ENCODE measurements at regions of chrX and their contacts with region 1.

Region 1: DNA sequence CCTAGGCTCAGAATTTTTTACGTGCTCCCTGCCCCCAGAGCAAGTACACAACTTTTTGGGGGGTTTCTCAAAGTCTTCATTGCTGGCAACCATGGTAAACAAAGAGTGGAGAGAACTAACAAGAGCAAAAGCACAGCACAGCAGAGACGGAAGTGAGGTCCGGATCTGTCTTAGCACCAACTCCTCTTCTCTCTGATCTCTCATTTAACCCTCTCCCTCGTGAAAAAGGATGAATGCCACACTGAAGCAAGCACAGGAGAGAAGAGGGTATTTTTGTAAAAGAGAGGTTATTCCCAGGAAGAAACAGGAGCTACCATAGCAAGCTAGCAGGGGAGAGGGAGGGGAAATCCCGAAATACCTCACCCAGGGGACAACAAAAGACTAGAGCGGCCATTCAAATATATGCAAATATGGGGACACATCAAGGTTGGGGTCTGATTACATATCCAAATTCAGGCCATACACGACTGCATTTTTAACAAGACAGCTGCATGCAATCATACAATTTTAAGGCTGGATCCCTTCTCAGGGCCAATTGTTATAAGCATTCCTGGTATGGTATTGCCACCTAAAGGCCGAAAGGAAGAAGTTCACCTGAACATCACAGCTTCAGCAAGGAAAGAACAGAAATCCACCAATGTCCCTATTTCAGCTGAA is 46.6 kb downstream of the CD40LG start:
- DNase-seq: no peak
- ATAC-seq: peak; percentile 89
- H3K4me3 ChIP-seq: no peak overlapping the region
- H3K27ac ChIP-seq: peak overlapping the region; percentile 35
- H3K4me1 ChIP-seq: peaks cover 20% of the 10 kb centered on the region
- H3K27me3 ChIP-seq: no peaks in the 10 kb centered on the region; a peak in 1 of 4 replicates
- CTCF ChIP-seq: peak; percentile 72 to 85 (median 72)
- EP300 ChIP-seq: no peak
- POLR2A ChIP-seq: no peak
- RAD21 ChIP-seq: peak; percentile 96

Region 2: GRCh38 chrX:135632353-135632752 is 1062.2 kb before region 1 on chrX:
- CTCF ChIA-PET with region 1: no interaction called
- POLR2A ChIA-PET with region 1: no interaction called
- RAD21 ChIA-PET with region 1: no interaction called
- SMC1A ChIA-PET with region 1: no interaction called
- in situ Hi-C with region 1: no loop called
- intact Hi-C with region 1: loop called (anchors 5 kb)
- DNase-seq: peak; percentile 21
- ATAC-seq: peak; percentile 91
- H3K4me3 ChIP-seq: no peak overlapping the region
- H3K27ac ChIP-seq: no peak overlapping the region
- H3K4me1 ChIP-seq: no peaks in the 10 kb centered on the region; the same call in 1 of the 2 replicates
- H3K27me3 ChIP-seq: no peaks in the 10 kb centered on the region
- CTCF ChIP-seq: peak; percentile 22 to 67 (median 25); a peak in 4 of 6 replicates
- EP300 ChIP-seq: no peak
- POLR2A ChIP-seq: no peak
- RAD21 ChIP-seq: peak; percentile 79

Region 3: GRCh38 chrX:136268051-136269048 is 426.2 kb before region 1 on chrX:
- CTCF ChIA-PET with region 1: interaction called, 6 read pairs
- POLR2A ChIA-PET with region 1: no interaction called
- RAD21 ChIA-PET with region 1: interaction called, 6 read pairs
- SMC1A ChIA-PET with region 1: interaction called, 7 read pairs
- in situ Hi-C with region 1: loop called (anchors 10 kb)
- intact Hi-C with region 1: no loop called
- DNase-seq: no peak
- ATAC-seq: peak; percentile 91
- H3K4me3 ChIP-seq: no peak overlapping the region
- H3K27ac ChIP-seq: no peak overlapping the region
- H3K4me1 ChIP-seq: no peaks in the 10 kb centered on the region; the same call in 1 of the 2 replicates
- H3K27me3 ChIP-seq: no peaks in the 10 kb centered on the region
- CTCF ChIP-seq: peak; percentile 74 to 78 (median 76); a peak in 5 of 6 replicates
- EP300 ChIP-seq: no peak
- POLR2A ChIP-seq: no peak
- RAD21 ChIP-seq: peak; percentile 87

Region 4: GRCh38 chrX:136496770-136497598 is 197.6 kb before region 1 on chrX and contains the start of gene HTATSF1:
- CTCF ChIA-PET with region 1: interaction called, 3 read pairs
- POLR2A ChIA-PET with region 1: no interaction called
- RAD21 ChIA-PET with region 1: interaction called, 6 read pairs
- SMC1A ChIA-PET with region 1: no interaction called
- in situ Hi-C with region 1: loop called (anchors 10 kb)
- intact Hi-C with region 1: loop called (anchors 2 kb)
- DNase-seq: peak; percentile 48
- ATAC-seq: peak; percentile 82
- H3K4me3 ChIP-seq: peak within 1 kb of the TSS; percentile 72
- H3K27ac ChIP-seq: peak within 1 kb of the TSS; percentile 90
- H3K4me1 ChIP-seq: no peaks in the 10 kb centered on the region
- H3K27me3 ChIP-seq: no peaks in the 10 kb centered on the region; a peak in 1 of 4 replicates
- CTCF ChIP-seq: no peak
- EP300 ChIP-seq: no peak
- POLR2A ChIP-seq: peak; percentile 57
- RAD21 ChIP-seq: no peak
- polyA plus RNA-seq, gene HTATSF1: 13.2 to 26.9 TPM

Region 5: GRCh38 chrX:136577552-136577951 is 117.0 kb before region 1 on chrX:
- CTCF ChIA-PET with region 1: interaction called, 48 read pairs
- POLR2A ChIA-PET with region 1: interaction called, 3 read pairs
- RAD21 ChIA-PET with region 1: interaction called, 20 read pairs
- SMC1A ChIA-PET with region 1: interaction called, 49 read pairs
- in situ Hi-C with region 1: no loop called
- intact Hi-C with region 1: loop called (anchors 1 kb)
- DNase-seq: no peak
- ATAC-seq: peak; percentile 100
- H3K4me3 ChIP-seq: no peak overlapping the region
- H3K27ac ChIP-seq: no peak overlapping the region
- H3K4me1 ChIP-seq: no peaks in the 10 kb centered on the region
- H3K27me3 ChIP-seq: no peaks in the 10 kb centered on the region
- CTCF ChIP-seq: peak; percentile 71 to 82 (median 82)
- EP300 ChIP-seq: no peak
- POLR2A ChIP-seq: no peak
- RAD21 ChIP-seq: peak; percentile 67

Region 6: GRCh38 chrX:136608295-136609171 is 86.0 kb before region 1 on chrX:
- CTCF ChIA-PET with region 1: interaction called, 104 read pairs
- POLR2A ChIA-PET with region 1: interaction called, 4 read pairs
- RAD21 ChIA-PET with region 1: interaction called, 73 read pairs
- SMC1A ChIA-PET with region 1: interaction called, 100 read pairs
- in situ Hi-C with region 1: no loop called
- intact Hi-C with region 1: loop called (anchors 1 kb)
- DNase-seq: no peak
- ATAC-seq: peak; percentile 80
- H3K4me3 ChIP-seq: no peak overlapping the region
- H3K27ac ChIP-seq: no peak overlapping the region
- H3K4me1 ChIP-seq: no peaks in the 10 kb centered on the region
- H3K27me3 ChIP-seq: no peaks in the 10 kb centered on the region
- CTCF ChIP-seq: peak; percentile 14 to 37 (median 29); a peak in 4 of 6 replicates
- EP300 ChIP-seq: no peak
- POLR2A ChIP-seq: no peak
- RAD21 ChIP-seq: peak; percentile 64

Region 7: DNA sequence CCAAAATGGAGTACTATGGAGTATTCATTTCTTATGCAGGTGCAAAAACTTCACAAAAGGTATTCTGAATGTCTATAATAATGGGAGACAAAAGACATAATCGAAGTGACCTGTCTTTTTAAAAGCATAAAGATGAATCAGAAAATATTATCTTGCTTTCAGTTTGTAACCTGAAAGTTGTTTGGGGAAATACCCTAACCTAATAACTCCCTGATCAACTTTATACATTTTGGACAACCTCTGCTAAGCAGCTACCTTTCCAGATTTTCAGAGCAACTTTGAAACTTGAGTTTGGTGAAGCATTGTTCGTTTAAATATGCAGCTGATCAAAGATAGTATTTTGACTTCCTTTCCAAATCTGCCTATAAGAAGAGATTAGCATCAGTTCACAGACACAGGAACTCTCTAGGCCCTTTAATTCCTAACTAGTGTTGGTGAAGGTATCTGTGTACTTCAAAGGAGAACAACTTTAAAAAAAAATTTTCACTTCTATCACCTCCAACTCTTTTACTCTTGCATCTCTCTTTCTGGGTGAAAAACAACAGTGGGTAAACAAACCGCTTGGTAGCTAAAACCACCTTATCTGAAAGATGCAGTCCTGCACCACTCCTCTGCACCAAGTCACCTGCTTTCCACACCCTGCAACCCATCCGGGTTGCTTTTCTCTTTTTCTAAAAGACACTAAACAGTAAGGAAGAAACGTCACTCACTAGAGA is 20.1 kb before region 1 on chrX:
- CTCF ChIA-PET with region 1: interaction called, 4 read pairs
- POLR2A ChIA-PET with region 1: interaction called, 4 read pairs
- RAD21 ChIA-PET with region 1: interaction called, 7 read pairs
- SMC1A ChIA-PET with region 1: interaction called, 11 read pairs
- in situ Hi-C with region 1: no loop called
- intact Hi-C with region 1: no loop called
- DNase-seq: no peak
- ATAC-seq: peak; percentile 56
- H3K4me3 ChIP-seq: peak overlapping the region; percentile 14; the same call in 1 of the 2 replicates
- H3K27ac ChIP-seq: peak overlapping the region; percentile 60
- H3K4me1 ChIP-seq: peaks cover 43% of the 10 kb centered on the region
- H3K27me3 ChIP-seq: no peaks in the 10 kb centered on the region
- CTCF ChIP-seq: no peak
- EP300 ChIP-seq: no peak
- POLR2A ChIP-seq: no peak
- RAD21 ChIP-seq: no peak